Activated CD4-positive, alpha-beta T cell treated with anti-CD3 and anti-CD28 coated beads for 36 hours (primary cell): ENCODE measurements at regions of chr3 and their contacts with region 1.

Region 1: GRCh38 chr3:18679238-18679637 is 254.1 kb upstream of the SATB1 start:
- DNase-seq: peak; percentile 69
- ATAC-seq: peak; percentile 87
- H3K4me3 Mint-ChIP-seq: peak overlapping the region; percentile 28
- H3K27ac Mint-ChIP-seq: peak overlapping the region; percentile 94
- H3K4me1 Mint-ChIP-seq: peaks cover 84% of the 10 kb centered on the region
- H3K27me3 Mint-ChIP-seq: no peaks in the 10 kb centered on the region

Region 2: GRCh38 chr3:18444595-18445400 is 234.4 kb before region 1 on chr3:
- CTCF ChIA-PET with region 1: interaction called, 5 read pairs
- POLR2A ChIA-PET with region 1: no interaction called
- intact Hi-C with region 1: loop called (anchors 1 to 2 kb)
- DNase-seq: peak; percentile 89
- ATAC-seq: peak; percentile 66
- H3K4me3 Mint-ChIP-seq: peak overlapping the region; percentile 96
- H3K27ac Mint-ChIP-seq: peak overlapping the region; percentile 91
- H3K4me1 Mint-ChIP-seq: peaks cover 25% of the 10 kb centered on the region
- H3K27me3 Mint-ChIP-seq: no peaks in the 10 kb centered on the region

Region 3: DNA sequence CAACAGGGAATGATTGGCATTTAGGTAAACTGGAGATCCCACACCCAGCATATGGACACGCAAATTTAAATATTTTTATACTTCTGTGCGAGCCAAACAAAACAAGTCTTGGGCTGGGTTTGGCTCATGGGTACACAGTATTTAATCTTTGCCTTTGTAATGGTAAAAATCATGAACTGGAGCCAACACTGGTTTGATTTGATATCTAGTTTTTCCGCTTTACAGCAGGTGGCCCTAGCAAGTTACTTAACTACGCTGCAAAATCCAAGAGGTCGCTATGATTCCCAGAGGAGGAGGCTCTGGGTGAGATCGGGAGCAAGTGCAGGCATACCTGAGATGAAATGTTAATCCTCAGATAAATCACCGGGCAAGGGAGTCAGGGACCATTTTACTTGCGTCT is 46.2 kb before region 1 on chr3:
- CTCF ChIA-PET with region 1: no interaction called
- POLR2A ChIA-PET with region 1: no interaction called
- intact Hi-C with region 1: no loop called
- DNase-seq: no peak
- ATAC-seq: no peak
- H3K4me3 Mint-ChIP-seq: no peak overlapping the region
- H3K27ac Mint-ChIP-seq: no peak overlapping the region
- H3K4me1 Mint-ChIP-seq: peaks cover 6% of the 10 kb centered on the region
- H3K27me3 Mint-ChIP-seq: no peaks in the 10 kb centered on the region